Esophagus muscularis mucosa (tissue), 4 donors: ENCODE measurements at regions of chr16 and their contacts with region 1.

Region 1: GRCh38 chr16:84277237-84277823 is 17.3 kb upstream of the WFDC1 start:
- DNase-seq: no peak
- H3K4me3 ChIP-seq: no peak overlapping the region
- H3K27ac ChIP-seq: no peak overlapping the region
- H3K4me1 ChIP-seq: no peaks in the 10 kb centered on the region
- H3K27me3 ChIP-seq: peaks cover 0 to 14% (median 0%) of the 10 kb centered on the region in 4 donors
- CTCF ChIP-seq: peak; percentile 72 to 84 (median 77)
- EP300 ChIP-seq: no peak
- POLR2A ChIP-seq: no peak

Region 2: GRCh38 chr16:84308120-84308519 is 30.8 kb after region 1 on chr16:
- intact Hi-C with region 1: loop called (anchors 2 kb)
- DNase-seq: no peak
- H3K4me3 ChIP-seq: no peak overlapping the region
- H3K27ac ChIP-seq: no peak overlapping the region
- H3K4me1 ChIP-seq: peaks cover 5 to 29% (median 14%) of the 10 kb centered on the region in 4 donors
- H3K27me3 ChIP-seq: peaks cover 0 to 40% (median 0%) of the 10 kb centered on the region in 4 donors
- CTCF ChIP-seq: peak; percentile 18 to 65 (median 51)
- EP300 ChIP-seq: no peak
- POLR2A ChIP-seq: no peak

Region 3: GRCh38 chr16:84484579-84485254 is 207.4 kb after region 1 on chr16:
- intact Hi-C with region 1: loop called (anchors 2 kb)
- DNase-seq: no peak
- H3K4me3 ChIP-seq: no peak overlapping the region
- H3K27ac ChIP-seq: no peak overlapping the region
- H3K4me1 ChIP-seq: peaks cover 0 to 13% (median 0%) of the 10 kb centered on the region in 4 donors
- H3K27me3 ChIP-seq: no peaks in the 10 kb centered on the region
- CTCF ChIP-seq: peak; percentile 62 to 77 (median 68)
- EP300 ChIP-seq: no peak
- POLR2A ChIP-seq: no peak